Common myeloid progenitor, CD34-positive (primary cell): ENCODE measurements at regions of chr11 and their contacts with region 1.

Region 1: GRCh38 chr11:9280655-9281301 is 15.6 kb upstream of the DENND5A start:
- DNase-seq: peak; percentile 89 to 97 (median 95)
- H3K4me3 ChIP-seq: peak overlapping the region in 5 of 7 experiments; percentile 1 to 51 (median 12)
- H3K27ac ChIP-seq: no peak overlapping the region
- H3K4me1 ChIP-seq: peaks cover 1 to 15% (median 13%) of the 10 kb centered on the region in 4 experiments
- H3K27me3 ChIP-seq: no peaks in the 10 kb centered on the region

Region 2: GRCh38 chr11:9293646-9294045 is 12.9 kb after region 1 on chr11:
- CTCF ChIA-PET with region 1: interaction called, 18 read pairs
- POLR2A ChIA-PET with region 1: interaction called, 3 read pairs
- DNase-seq: no peak
- H3K4me3 ChIP-seq: no peak overlapping the region
- H3K27ac ChIP-seq: no peak overlapping the region
- H3K4me1 ChIP-seq: no peaks in the 10 kb centered on the region
- H3K27me3 ChIP-seq: no peaks in the 10 kb centered on the region